BJ (cell line): ENCODE measurements at regions of chr3 and their contacts with region 1.

Region 1: GRCh38 chr3:74661672-74662071 is 47.2 kb upstream of the CNTN3 start:
- DNase-seq: no peak
- H3K4me3 ChIP-seq: no peak overlapping the region
- H3K27me3 ChIP-seq: no peaks in the 10 kb centered on the region
- CTCF ChIP-seq: no peak

Region 2: DNA sequence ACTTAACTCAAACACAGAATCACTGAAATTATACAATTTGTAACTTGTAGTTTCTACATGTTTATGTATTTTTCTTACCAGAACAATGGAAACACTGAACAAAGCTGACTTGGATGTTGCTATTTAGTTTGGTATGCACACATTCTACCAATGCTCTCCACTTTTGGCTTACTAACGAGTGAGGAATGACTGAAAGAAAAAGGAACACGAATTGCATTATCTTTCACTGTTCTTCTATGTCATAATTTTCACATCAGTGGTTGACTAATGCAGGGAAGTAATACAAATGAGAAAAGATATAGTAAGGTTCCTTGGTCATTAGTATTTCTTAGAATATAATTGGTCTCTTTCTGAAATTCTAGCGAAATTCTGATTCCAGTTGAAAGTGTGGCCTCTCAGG is 37.4 kb before region 1 on chr3:
- CTCF ChIA-PET with region 1: no interaction called
- POLR2A ChIA-PET with region 1: no interaction called
- DNase-seq: peak; percentile 34
- H3K4me3 ChIP-seq: no peak overlapping the region
- H3K27me3 ChIP-seq: no peaks in the 10 kb centered on the region
- CTCF ChIP-seq: no peak

Region 3: GRCh38 chr3:74693696-74694393 is 32.2 kb after region 1 on chr3:
- CTCF ChIA-PET with region 1: no interaction called
- POLR2A ChIA-PET with region 1: interaction called, 34 read pairs
- DNase-seq: no peak
- H3K4me3 ChIP-seq: no peak overlapping the region
- H3K27me3 ChIP-seq: no peaks in the 10 kb centered on the region
- CTCF ChIP-seq: no peak